ENCODE measurements at regions of chr2 and their contacts with region 1.

Region 1: DNA sequence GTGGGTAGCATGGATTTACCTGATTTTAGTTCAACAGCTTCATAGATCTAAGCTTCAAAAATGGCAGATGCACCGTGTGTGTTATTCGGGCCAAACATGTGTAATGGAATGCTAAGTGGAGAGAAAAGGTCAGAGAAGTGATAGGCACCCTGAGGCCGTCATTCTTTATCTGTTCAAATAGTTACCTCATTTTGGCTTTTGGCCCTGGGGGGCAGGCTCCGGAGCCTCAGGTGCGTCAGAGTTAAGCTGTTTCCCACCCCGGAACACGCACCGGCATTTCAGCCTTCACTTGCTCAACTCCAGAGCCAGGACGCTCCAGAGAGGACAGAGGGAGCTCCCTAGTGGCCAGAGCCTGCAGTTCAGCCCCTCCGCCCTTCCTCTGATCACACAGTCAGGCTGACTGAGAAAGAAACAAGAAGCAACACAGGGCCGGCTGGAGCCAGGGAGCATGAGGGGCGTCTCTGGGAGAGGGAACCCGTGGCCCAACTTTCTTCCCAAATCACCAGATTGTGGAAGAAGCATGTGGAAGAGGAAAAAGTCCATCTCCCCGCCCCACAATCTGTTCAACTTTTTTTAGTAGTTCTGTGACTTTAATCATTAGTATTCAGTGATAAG is 135.2 kb upstream of the EPC2 start:
- DNase-seq: peak; percentile 62 to 90 (median 82)
- ATAC-seq: peak; percentile 100
- H3K4me3 ChIP-seq: peak overlapping the region in 1 of 2 donors; percentile 16
- H3K27ac ChIP-seq: no peak overlapping the region
- H3K4me1 ChIP-seq: no peaks in the 10 kb centered on the region
- H3K27me3 ChIP-seq: no peaks in the 10 kb centered on the region
- CTCF ChIP-seq: peak; percentile 89 to 90

Region 2: GRCh38 chr2:147989809-147990403 is 519.5 kb before region 1 on chr2:
- intact Hi-C with region 1: loop called in 1 of 2 experiments (anchors 5 kb)
- DNase-seq: peak in 2 of 4 donors; percentile 38 to 66
- ATAC-seq: peak; percentile 93
- H3K4me3 ChIP-seq: no peak overlapping the region
- H3K27ac ChIP-seq: no peak overlapping the region
- H3K4me1 ChIP-seq: no peaks in the 10 kb centered on the region
- H3K27me3 ChIP-seq: no peaks in the 10 kb centered on the region
- CTCF ChIP-seq: peak; percentile 27 to 65

Region 3: DNA sequence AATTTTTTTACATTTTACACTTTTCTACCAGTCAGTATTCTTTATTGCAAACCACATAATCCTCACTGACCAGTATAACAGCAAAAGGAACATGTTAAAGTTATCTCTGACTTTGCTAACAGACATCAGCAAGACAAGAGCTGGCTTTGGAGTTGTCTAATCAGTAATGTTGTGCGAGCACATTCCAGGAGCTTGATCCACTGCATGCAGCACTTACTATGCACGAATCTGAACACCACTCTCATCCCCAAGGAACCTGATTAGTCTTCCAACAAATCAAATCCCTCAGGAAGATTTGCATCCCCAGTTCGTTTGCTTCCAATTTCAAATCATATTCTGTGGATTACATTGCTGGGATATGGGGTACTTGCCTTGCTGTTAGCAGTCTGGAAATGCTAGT is 134.2 kb before region 1 on chr2:
- intact Hi-C with region 1: no loop called
- DNase-seq: no peak
- ATAC-seq: no peak
- H3K4me3 ChIP-seq: no peak overlapping the region
- H3K27ac ChIP-seq: no peak overlapping the region
- H3K4me1 ChIP-seq: no peaks in the 10 kb centered on the region
- H3K27me3 ChIP-seq: no peaks in the 10 kb centered on the region
- CTCF ChIP-seq: no peak

Region 4: DNA sequence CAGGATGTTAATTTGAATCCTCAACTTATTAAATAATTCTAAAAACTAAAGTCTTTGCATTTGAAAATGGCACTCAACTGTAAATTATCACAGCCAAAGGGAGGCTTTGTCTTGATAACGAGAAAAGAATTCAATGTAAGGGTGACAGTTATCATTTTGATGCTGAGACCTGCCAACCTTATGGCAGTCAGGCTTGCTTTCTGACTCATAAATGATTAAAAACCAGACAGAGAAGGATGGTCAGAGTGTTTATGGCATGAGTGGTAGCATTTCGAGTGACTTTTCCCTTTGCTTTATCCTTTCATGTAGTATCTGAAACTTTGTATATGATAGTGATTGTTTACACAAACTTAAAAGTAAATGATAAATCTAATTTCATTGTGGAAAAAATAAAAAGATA is 81.2 kb after region 1 on chr2:
- intact Hi-C with region 1: no loop called
- DNase-seq: no peak
- ATAC-seq: no peak
- H3K4me3 ChIP-seq: no peak overlapping the region
- H3K27ac ChIP-seq: no peak overlapping the region
- H3K4me1 ChIP-seq: no peaks in the 10 kb centered on the region
- H3K27me3 ChIP-seq: no peaks in the 10 kb centered on the region
- CTCF ChIP-seq: no peak

Measured in left lung (tissue), 14 donors.